ENCODE measurements at regions of chr7 and their contacts with region 1.

Region 1: DNA sequence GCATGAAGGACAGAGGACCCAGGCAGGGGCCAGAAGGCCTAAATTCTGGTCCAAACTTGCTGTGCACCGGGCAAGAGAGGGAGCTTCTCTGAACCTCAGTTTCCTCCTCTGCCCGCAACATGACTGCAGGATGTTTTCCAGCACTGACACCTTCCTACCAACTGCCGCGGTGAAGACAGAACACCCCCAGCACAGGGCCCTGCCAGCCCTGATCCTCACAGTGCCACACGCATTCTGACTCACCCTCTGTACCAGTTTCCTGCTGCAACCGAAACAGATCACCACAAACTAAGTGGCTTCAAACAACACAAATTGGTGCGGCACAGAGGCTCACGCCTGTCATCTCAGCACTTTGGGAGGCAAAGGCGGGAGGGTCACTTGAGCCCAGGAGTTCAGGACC is 18.1 kb downstream of the MAD1L1 start:
- DNase-seq: no peak
- H3K4me3 ChIP-seq: no peak overlapping the region
- H3K27ac ChIP-seq: no peak overlapping the region
- H3K4me1 ChIP-seq: no peaks in the 10 kb centered on the region
- H3K27me3 ChIP-seq: no peaks in the 10 kb centered on the region
- CTCF ChIP-seq: no peak
- POLR2A ChIP-seq: no peak

Region 2: GRCh38 chr7:1569833-1570633 is 644.6 kb before region 1 on chr7 and contains the start of gene PSMG3:
- intact Hi-C with region 1: loop called in 1 of 2 experiments (anchors 10 kb)
- DNase-seq: peak; percentile 88 to 94 (median 91)
- H3K4me3 ChIP-seq: peak within 1 kb of the TSS; percentile 65 to 91 (median 83)
- H3K27ac ChIP-seq: peak within 1 kb of the TSS; percentile 87 to 94 (median 92)
- H3K4me1 ChIP-seq: peaks cover 22 to 24% of the 10 kb centered on the region in 2 donors
- H3K27me3 ChIP-seq: no peaks in the 10 kb centered on the region
- CTCF ChIP-seq: peak in 5 of 6 experiments; percentile 27 to 60 (median 39)
- POLR2A ChIP-seq: peak; percentile 67 to 74
- total RNA-seq, gene PSMG3: 19.1 to 64.3 (median 26.1) TPM

Region 3: DNA sequence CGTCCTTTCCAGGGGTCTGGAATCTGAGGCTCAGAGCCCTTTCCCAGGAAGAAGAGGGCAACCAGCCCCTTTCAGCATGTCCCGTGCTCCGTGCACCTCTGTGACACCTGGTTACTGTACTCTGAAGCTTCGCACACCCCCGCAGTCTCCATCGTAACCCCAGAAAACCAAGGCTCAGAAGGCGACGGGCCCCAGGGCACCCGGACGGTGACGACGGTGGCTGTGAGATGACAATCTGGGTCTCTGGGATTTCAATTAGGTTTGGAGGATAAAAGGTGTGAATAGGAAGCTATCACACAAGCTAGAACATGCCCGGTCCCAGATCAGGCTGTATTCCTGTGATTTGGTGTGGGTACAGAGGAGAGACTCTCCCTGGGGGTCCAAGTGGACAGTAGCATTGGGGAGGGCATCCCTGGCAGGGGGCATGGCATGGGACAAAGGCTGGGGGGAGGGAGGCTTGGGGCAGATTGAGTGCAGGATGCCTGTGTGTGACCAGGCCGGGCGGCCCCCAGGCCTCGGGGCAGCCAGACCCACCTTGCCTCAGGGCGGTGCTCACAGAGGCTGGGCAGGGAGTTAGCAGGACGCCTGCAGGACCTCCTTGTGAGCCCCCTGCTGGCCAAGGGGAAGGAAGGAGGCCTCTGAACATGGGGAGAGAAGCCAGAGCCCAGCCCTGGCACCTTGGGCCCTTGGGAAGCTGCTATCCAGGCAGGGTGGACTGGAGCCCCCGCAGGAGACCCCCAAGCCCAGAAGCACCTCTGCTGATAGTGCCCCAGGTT is 621.4 kb before region 1 on chr7:
- intact Hi-C with region 1: loop called in 1 of 2 experiments (anchors 10 kb)
- DNase-seq: no peak
- H3K4me3 ChIP-seq: no peak overlapping the region
- H3K27ac ChIP-seq: no peak overlapping the region
- H3K4me1 ChIP-seq: no peaks in the 10 kb centered on the region
- H3K27me3 ChIP-seq: peaks cover 25% of the 10 kb centered on the region
- CTCF ChIP-seq: peak in 2 of 6 experiments; percentile 10 to 25
- POLR2A ChIP-seq: no peak

Region 4: GRCh38 chr7:1716263-1717094 is 498.2 kb before region 1 on chr7:
- intact Hi-C with region 1: no loop called
- DNase-seq: no peak
- H3K4me3 ChIP-seq: no peak overlapping the region
- H3K27ac ChIP-seq: no peak overlapping the region
- H3K4me1 ChIP-seq: no peaks in the 10 kb centered on the region
- H3K27me3 ChIP-seq: peaks cover 12% of the 10 kb centered on the region
- CTCF ChIP-seq: no peak
- POLR2A ChIP-seq: no peak

Region 5: GRCh38 chr7:1829111-1829510 is 385.5 kb before region 1 on chr7:
- intact Hi-C with region 1: no loop called
- DNase-seq: no peak
- H3K4me3 ChIP-seq: no peak overlapping the region
- H3K27ac ChIP-seq: no peak overlapping the region
- H3K4me1 ChIP-seq: no peaks in the 10 kb centered on the region
- H3K27me3 ChIP-seq: no peaks in the 10 kb centered on the region
- CTCF ChIP-seq: no peak
- POLR2A ChIP-seq: no peak